Activated CD4-positive, alpha-beta T cell treated with anti-CD3 and anti-CD28 coated beads for 36 hours (primary cell): ENCODE measurements at regions of chr10 and their contacts with region 1.

Region 1: DNA sequence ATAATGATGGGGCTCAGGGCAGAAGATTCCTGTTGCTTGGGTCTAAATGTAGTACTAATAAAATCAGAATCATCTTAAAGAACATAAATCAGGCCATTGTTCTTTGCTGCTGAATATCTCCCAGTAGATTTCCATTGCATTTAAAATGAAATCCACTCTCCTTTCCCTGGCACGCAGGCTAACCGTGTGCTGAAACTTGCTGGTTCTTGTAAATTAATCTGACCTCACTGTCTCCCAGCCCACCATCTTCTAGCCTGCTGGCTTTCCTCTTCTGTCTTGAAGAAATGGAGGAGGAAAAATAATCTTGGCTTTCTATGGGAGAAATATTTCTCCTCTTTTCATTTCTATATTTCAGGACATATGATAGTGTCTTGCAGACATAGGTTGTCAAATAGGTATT is 1396.9 kb downstream of the GATA3 start:
- DNase-seq: no peak
- ATAC-seq: no peak
- H3K4me3 Mint-ChIP-seq: no peak overlapping the region
- H3K27ac Mint-ChIP-seq: no peak overlapping the region
- H3K4me1 Mint-ChIP-seq: no peaks in the 10 kb centered on the region
- H3K27me3 Mint-ChIP-seq: peaks cover 4% of the 10 kb centered on the region

Region 2: DNA sequence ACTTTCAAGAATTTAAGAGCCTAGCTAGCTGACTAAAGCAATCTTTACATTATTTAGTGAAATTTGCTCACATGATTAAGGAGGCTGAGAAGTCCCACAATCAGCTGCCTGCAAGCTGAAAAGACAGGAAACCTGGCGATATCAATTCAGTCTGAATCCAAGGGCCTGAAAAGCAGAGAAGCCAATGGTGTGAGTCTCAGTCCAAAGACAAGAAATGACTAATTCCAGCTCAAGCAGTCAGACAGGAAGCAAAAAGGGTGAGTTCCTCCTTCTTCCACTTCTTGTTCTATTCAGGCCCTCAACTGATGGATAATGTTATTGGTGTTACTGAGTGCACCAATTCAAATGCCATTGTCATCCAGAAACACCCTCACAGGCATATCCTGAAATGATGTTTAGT is 334.7 kb after region 1 on chr10:
- CTCF ChIA-PET with region 1: no interaction called
- POLR2A ChIA-PET with region 1: no interaction called
- intact Hi-C with region 1: loop called in 1 of 2 experiments (anchors 5 kb)
- DNase-seq: no peak
- ATAC-seq: no peak
- H3K4me3 Mint-ChIP-seq: no peak overlapping the region
- H3K27ac Mint-ChIP-seq: no peak overlapping the region
- H3K4me1 Mint-ChIP-seq: no peaks in the 10 kb centered on the region
- H3K27me3 Mint-ChIP-seq: peaks cover 8% of the 10 kb centered on the region